MCF 10A (cell line): ENCODE measurements at regions of chr14 and their contacts with region 1.

Region 1: GRCh38 chr14:104746934-104747481 is 5.9 kb upstream of the SIVA1 start:
- DNase-seq: no peak
- H3K4me3 Mint-ChIP-seq: no peak overlapping the region
- H3K27ac Mint-ChIP-seq: peak overlapping the region; percentile 66
- H3K4me1 Mint-ChIP-seq: peaks cover 25% of the 10 kb centered on the region
- H3K27me3 Mint-ChIP-seq: no peaks in the 10 kb centered on the region
- CTCF ChIP-seq: no peak

Region 2: GRCh38 chr14:104735830-104736642 is 11.0 kb before region 1 on chr14:
- CTCF ChIA-PET with region 1: interaction called, 12 read pairs
- POLR2A ChIA-PET with region 1: interaction called, 24 read pairs
- intact Hi-C with region 1: loop called (anchors 2 kb)
- DNase-seq: peak; percentile 81
- H3K4me3 Mint-ChIP-seq: peak overlapping the region; percentile 11
- H3K27ac Mint-ChIP-seq: peak overlapping the region; percentile 79
- H3K4me1 Mint-ChIP-seq: peaks cover 21% of the 10 kb centered on the region
- H3K27me3 Mint-ChIP-seq: no peaks in the 10 kb centered on the region
- CTCF ChIP-seq: no peak

Region 3: GRCh38 chr14:104805326-104805678 is 58.3 kb after region 1 on chr14:
- CTCF ChIA-PET with region 1: no interaction called
- POLR2A ChIA-PET with region 1: no interaction called
- intact Hi-C with region 1: no loop called
- DNase-seq: peak; percentile 78
- H3K4me3 Mint-ChIP-seq: no peak overlapping the region
- H3K27ac Mint-ChIP-seq: no peak overlapping the region
- H3K4me1 Mint-ChIP-seq: no peaks in the 10 kb centered on the region
- H3K27me3 Mint-ChIP-seq: no peaks in the 10 kb centered on the region
- CTCF ChIP-seq: no peak

Region 4: GRCh38 chr14:104856869-104857860 is 110.2 kb after region 1 on chr14:
- CTCF ChIA-PET with region 1: no interaction called
- POLR2A ChIA-PET with region 1: no interaction called
- intact Hi-C with region 1: no loop called
- DNase-seq: no peak
- H3K4me3 Mint-ChIP-seq: no peak overlapping the region
- H3K27ac Mint-ChIP-seq: no peak overlapping the region
- H3K4me1 Mint-ChIP-seq: no peaks in the 10 kb centered on the region
- H3K27me3 Mint-ChIP-seq: no peaks in the 10 kb centered on the region
- CTCF ChIP-seq: no peak